CD4-positive, alpha-beta T cell (primary cell): ENCODE measurements at regions of chr11 and their contacts with region 1.

Region 1: DNA sequence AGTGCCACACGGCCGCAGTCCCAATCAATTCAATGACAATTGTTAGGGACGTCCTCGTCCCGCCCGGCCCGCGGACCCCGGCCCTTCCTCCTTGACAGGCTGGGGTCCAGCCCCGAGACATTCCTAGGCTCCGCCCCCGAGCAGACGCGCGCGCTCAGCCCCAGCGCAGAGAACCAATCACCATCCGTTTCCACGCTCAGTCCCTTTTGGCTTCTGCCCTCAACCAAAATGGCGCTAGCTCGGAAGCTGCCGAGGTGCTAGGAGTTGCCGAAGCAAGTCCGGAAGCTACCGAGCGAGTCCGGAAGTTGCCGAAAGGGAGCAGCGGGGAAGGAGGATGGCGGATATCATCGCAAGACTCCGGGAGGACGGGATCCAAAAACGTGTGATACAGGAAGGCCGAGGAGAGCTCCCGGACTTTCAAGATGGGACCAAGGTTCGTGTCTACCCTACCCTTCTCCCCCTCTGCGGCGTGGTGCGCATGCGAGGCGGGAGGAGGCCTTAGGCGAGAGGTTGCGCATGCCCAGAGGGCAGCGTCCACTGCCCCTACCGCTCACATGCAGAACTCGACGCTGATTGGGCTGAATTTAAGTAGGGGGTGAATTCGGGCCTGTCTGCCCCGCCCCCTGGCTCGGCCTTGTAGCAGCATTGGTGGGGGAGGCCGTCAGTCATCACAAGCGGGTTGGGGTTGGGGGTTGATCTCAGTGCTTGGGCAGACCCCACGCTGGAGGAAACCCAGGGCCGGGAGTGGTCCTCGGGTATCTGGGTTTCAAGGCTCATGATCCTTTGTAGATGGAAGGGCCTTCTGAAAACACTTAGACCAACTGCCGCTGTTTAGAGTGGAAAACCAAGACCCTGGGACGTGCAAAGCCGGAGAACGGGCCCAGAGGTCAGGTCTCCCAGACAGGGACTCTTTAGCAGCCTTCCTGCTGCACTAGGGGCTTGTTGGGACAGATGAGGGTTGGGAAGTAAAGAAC is at the start of gene AIP:
- DNase-seq: peak; percentile 94 to 99 (median 97)
- ATAC-seq: peak; percentile 77
- H3K4me3 ChIP-seq: peak within 1 kb of the TSS; percentile 80
- H3K4me3 Mint-ChIP-seq: peak within 1 kb of the TSS; percentile 91
- H3K27ac ChIP-seq: peak within 1 kb of the TSS; percentile 90
- H3K27ac Mint-ChIP-seq: peak within 1 kb of the TSS; percentile 95
- H3K4me1 ChIP-seq: peaks cover 63% of the 10 kb centered on the region
- H3K4me1 Mint-ChIP-seq: peaks cover 56% of the 10 kb centered on the region
- H3K27me3 ChIP-seq: no peaks in the 10 kb centered on the region
- H3K27me3 Mint-ChIP-seq: no peaks in the 10 kb centered on the region
- CTCF ChIP-seq: peak; percentile 37
- total RNA-seq, gene AIP: 115 to 117 TPM

Region 2: DNA sequence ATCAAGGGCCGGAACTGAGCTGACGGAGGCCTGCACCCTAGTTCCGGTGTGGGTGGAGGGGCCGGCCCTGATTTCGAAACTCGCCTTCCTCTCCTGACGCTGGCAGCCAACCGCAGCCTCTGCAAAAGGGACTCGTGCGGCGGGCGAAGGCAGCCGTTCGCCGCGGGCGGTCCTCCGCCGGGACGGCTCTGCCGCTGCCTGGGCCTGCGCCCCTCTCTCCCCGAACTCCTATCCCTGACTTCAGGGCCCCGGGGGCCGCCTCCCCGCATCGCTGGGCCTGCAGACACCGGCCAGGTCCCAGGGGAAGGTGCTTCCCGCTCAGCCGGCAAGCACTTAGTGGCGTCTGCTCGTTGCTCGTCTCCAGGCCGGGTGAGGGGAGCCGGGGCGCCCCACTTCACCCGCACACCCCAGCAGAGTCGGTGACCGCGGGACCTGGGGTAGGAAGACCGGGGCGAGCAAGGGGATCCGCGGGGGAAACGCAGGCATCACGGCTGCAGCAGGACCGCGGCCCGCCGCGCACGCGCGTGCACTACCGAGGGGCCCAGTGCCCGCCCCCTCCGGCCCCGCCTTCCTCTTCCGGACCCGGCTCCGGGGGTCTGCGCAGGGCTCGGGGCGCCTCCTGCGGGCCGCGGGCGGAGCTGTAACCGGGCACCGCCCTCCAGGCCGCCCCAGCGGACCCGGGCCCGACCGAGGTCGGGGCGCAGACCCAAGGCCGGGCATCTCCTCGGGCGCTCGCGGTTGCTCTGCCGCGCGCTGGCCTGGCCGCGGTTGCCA is 194.5 kb before region 1 on chr11:
- CTCF ChIA-PET with region 1: no interaction called
- POLR2A ChIA-PET with region 1: interaction called, 3 read pairs
- intact Hi-C with region 1: loop called in 1 of 2 experiments (anchors 10 kb)
- DNase-seq: peak; percentile 79 to 95 (median 89)
- ATAC-seq: peak; percentile 63
- H3K4me3 ChIP-seq: peak overlapping the region; percentile 91
- H3K4me3 Mint-ChIP-seq: peak overlapping the region; percentile 83
- H3K27ac ChIP-seq: peak overlapping the region; percentile 90 to 95
- H3K27ac Mint-ChIP-seq: peak overlapping the region; percentile 90
- H3K4me1 ChIP-seq: peaks cover 86% of the 10 kb centered on the region
- H3K4me1 Mint-ChIP-seq: peaks cover 49% of the 10 kb centered on the region
- H3K27me3 ChIP-seq: no peaks in the 10 kb centered on the region
- H3K27me3 Mint-ChIP-seq: no peaks in the 10 kb centered on the region
- CTCF ChIP-seq: peak; percentile 48

Region 3: DNA sequence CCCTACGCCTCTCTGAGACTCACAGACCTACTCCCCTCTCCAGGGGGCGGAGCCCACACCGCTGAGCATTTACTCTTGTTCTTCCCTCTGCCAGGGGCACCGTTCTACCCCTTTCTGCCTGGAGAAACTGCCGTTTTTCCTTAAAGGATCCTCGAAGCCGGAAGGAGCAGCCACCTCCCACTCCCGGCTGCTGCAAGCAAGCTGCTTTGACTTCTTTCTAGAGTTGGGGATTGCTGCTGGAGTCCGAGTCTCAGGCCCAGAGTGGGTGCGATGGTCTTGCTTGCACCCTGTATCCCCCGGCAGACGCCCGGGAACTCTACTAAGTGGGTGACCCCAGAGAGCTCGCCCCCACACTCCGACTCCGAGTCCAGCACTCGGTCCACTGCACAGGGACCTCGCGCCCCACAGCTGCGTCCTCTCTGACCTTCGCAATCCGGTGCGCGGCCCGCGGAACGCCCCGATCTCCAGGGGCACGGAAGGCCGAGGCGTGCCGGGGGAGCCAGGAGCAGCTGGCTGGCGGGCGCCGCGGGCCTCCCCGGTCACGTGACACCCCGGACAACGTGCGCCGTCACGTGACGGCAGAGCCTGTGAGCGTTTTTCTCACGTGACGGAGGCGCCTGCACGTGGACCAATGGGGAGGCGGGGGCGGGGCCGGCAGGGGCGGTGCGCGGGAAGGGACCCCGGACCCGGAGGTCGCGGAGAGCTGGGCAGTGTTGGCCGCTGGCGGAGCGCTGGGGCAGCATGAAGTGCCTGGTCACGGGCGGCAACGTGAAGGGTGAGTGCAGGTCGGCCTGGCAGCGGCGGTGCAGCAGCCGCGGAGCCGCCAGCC is 91.6 kb before region 1 on chr11 and contains the start of gene RAD9A:
- CTCF ChIA-PET with region 1: interaction called, 3 read pairs
- POLR2A ChIA-PET with region 1: interaction called, 12 read pairs
- intact Hi-C with region 1: no loop called
- DNase-seq: peak; percentile 82 to 97 (median 90)
- ATAC-seq: peak; percentile 83
- H3K4me3 ChIP-seq: peak within 1 kb of the TSS; percentile 90
- H3K4me3 Mint-ChIP-seq: peak within 1 kb of the TSS; percentile 88
- H3K27ac ChIP-seq: peak within 1 kb of the TSS; percentile 55 to 77
- H3K27ac Mint-ChIP-seq: peak within 1 kb of the TSS; percentile 76
- H3K4me1 ChIP-seq: peaks cover 42% of the 10 kb centered on the region
- H3K4me1 Mint-ChIP-seq: peaks cover 38% of the 10 kb centered on the region
- H3K27me3 ChIP-seq: no peaks in the 10 kb centered on the region
- H3K27me3 Mint-ChIP-seq: no peaks in the 10 kb centered on the region
- CTCF ChIP-seq: no peak
- total RNA-seq, gene RAD9A: 19.3 to 20.3 TPM

Region 4: DNA sequence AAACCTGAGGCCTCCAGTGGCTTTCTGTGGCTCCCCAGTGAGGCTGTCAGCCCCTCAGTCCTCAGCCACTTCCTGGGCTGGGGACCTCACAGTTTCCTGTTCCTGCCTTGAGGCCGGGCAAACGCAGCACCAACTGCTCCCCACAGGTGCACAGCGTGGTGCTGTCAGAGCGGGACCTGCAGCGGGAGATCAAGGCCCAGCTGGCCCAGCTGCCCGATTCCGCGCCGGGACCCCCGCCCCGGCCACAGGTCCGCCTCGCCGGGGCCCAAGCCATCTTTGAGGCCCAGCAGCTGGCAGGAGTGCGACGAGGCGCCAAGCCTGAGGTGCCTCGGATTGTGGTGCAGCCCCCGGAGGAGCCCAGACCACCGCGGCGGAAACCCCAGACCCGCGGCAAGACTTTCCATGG is 73.8 kb before region 1 on chr11:
- CTCF ChIA-PET with region 1: interaction called, 6 read pairs
- POLR2A ChIA-PET with region 1: interaction called, 110 read pairs
- intact Hi-C with region 1: no loop called
- DNase-seq: peak in 13 of 14 experiments; percentile 45 to 92 (median 76)
- ATAC-seq: peak; percentile 62
- H3K4me3 ChIP-seq: peak overlapping the region; percentile 100
- H3K4me3 Mint-ChIP-seq: peak overlapping the region; percentile 88
- H3K27ac ChIP-seq: peak overlapping the region; percentile 75 to 84
- H3K27ac Mint-ChIP-seq: peak overlapping the region; percentile 98
- H3K4me1 ChIP-seq: peaks cover 98% of the 10 kb centered on the region
- H3K4me1 Mint-ChIP-seq: peaks cover 91% of the 10 kb centered on the region
- H3K27me3 ChIP-seq: no peaks in the 10 kb centered on the region
- H3K27me3 Mint-ChIP-seq: no peaks in the 10 kb centered on the region
- CTCF ChIP-seq: no peak

Region 5: GRCh38 chr11:67420646-67421420 is 62.3 kb before region 1 on chr11:
- CTCF ChIA-PET with region 1: no interaction called
- POLR2A ChIA-PET with region 1: interaction called, 18 read pairs
- intact Hi-C with region 1: loop called in 1 of 2 experiments (anchors 5 kb)
- DNase-seq: peak; percentile 97 to 100 (median 99)
- ATAC-seq: peak; percentile 79
- H3K4me3 ChIP-seq: peak overlapping the region; percentile 50
- H3K4me3 Mint-ChIP-seq: peak overlapping the region; percentile 86
- H3K27ac ChIP-seq: peak overlapping the region; percentile 15 to 79
- H3K27ac Mint-ChIP-seq: peak overlapping the region; percentile 94
- H3K4me1 ChIP-seq: peaks cover 57% of the 10 kb centered on the region
- H3K4me1 Mint-ChIP-seq: peaks cover 56% of the 10 kb centered on the region
- H3K27me3 ChIP-seq: no peaks in the 10 kb centered on the region
- H3K27me3 Mint-ChIP-seq: no peaks in the 10 kb centered on the region
- CTCF ChIP-seq: no peak